Activated naive CD8-positive, alpha-beta T cell treated with anti-CD3 and anti-CD28 coated beads, Interleukin-2, amount 10 ng/mL, durations not matched to agents 7 days and 5 days (primary cell): ENCODE measurements at regions of chr18 and their contacts with region 1.

Region 1: DNA sequence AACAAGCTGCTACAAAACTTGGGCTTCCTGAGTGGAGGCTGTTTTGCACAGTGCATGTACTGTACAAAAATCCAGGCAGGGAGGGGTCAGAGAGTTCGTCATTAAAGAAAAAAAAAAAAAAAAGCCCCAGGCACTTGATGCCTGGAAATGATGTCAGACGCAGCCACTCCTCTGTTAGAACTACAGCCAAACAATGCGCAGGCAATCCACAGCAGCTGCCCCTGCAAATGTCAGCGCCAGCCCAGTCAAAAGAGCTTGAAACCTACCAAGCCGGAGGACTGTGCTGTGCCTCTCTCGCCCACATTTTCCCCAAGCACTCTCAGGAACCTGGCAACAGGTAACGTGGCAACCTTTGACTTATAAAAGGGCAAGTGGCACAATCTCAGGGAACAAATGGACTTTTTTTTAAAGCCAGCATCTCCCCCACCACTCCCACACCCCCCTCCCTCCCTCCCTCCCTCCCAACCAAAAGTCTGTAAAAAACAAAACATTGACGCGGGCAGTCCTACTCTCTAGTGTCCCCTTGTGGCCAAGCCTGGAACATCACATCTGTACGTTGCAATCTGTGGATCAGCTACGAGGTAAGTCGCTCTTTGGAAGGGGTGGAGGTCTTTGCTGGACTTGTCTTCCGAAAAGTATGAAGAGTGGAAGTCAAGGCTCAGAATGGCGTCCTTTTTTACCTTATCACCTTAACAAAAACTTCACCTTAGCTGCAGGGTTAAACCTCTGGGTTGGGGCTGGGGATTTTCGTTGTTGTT is 144.1 kb downstream of the TGIF1 start:
- DNase-seq: peak; percentile 81
- ATAC-seq: peak; percentile 90
- H3K4me3 Mint-ChIP-seq: peak overlapping the region; percentile 94
- H3K27ac Mint-ChIP-seq: peak overlapping the region; percentile 97
- H3K4me1 Mint-ChIP-seq: peaks cover 34% of the 10 kb centered on the region
- H3K27me3 Mint-ChIP-seq: no peaks in the 10 kb centered on the region

Region 2: DNA sequence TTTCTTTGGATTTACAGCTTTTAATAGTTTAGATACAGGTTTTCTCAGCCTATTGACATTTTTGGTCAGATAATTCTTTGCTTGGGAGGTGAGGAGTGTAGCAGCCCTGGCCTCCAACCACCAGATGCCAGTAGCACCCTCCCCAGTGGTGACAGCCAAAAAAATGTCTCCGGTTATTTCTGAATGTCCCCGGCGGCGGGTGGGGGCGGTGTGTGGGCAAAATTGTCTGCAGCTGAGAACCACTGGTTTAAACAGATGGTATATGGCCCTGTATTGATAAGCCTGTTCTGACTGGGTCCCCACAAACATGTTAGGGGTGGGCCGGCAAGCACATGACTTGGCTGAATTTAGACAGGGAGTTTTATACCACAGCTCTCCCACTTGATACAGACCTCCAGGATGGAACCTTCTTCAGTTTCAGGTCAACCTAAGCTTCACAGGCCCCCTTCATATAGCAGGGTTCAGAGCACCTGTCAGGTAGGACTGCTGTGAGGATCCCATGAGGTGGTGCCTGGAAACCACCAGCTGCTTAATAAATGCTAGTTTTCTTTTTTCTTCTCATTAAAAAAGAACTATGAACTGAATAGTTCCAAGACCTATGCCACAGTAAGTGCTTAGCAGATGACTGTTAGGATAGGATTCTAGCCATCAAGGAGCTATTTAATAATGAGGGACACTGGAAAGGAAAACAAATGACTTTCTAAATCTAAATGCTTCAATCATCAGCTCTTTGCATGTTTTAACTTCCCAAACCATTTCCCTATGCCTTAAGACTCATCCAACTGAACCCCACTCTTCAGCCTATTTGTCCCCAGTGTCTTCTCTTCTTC is 599.3 kb before region 1 on chr18:
- POLR2A ChIA-PET with region 1: no interaction called
- DNase-seq: peak; percentile 73
- ATAC-seq: peak; percentile 81
- H3K4me3 Mint-ChIP-seq: peak overlapping the region; percentile 52
- H3K27ac Mint-ChIP-seq: peak overlapping the region; percentile 75
- H3K4me1 Mint-ChIP-seq: peaks cover 57% of the 10 kb centered on the region
- H3K27me3 Mint-ChIP-seq: no peaks in the 10 kb centered on the region

Region 3: DNA sequence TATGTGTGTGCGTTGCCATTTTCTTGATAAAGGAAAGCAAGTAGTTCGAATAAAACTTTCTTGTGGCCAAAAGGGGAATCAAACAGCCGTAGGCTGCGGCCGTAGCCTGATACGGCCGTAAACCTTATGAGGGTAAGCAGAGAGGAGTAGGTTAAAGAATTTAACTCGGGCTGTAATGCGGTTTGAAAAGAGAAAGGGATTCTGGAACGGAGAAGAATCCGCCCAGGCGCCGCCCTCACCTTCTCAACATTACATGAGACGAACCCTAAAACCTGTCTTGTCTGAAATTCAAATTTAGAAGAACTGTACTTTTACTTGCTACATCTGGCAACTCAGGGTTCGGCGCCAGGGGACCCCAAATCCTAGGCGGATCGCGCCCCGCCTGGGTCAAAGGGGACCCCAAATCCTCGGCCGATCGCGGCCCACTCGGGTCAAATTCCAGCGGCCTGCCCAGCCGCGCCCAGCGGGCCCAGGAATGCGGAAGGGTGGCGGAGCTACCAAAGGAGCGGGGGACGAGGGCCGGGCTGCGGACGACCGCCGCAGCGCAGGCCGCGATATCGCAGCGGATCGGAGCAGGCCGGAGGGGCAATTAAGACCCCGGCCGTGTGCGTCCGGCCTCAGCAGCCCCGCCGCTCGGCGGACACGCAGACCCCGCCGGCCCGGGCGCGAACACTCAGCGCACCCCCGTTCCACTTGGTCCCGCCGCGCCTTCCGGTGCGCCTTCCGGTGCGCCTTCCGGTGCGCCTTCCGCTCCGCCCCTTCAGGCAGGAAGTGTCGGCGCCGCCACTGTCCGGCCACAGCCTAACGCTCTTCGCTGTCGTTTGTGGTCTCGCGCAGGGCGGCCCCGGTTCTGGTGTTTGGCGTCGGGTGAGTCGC is 332.5 kb before region 1 on chr18 and contains the start of gene MYL12B:
- POLR2A ChIA-PET with region 1: interaction called, 10 read pairs
- DNase-seq: peak; percentile 87
- ATAC-seq: peak; percentile 69
- H3K4me3 Mint-ChIP-seq: peak within 1 kb of the TSS; percentile 99
- H3K27ac Mint-ChIP-seq: peak within 1 kb of the TSS; percentile 100
- H3K4me1 Mint-ChIP-seq: peaks cover 55% of the 10 kb centered on the region
- H3K27me3 Mint-ChIP-seq: no peaks in the 10 kb centered on the region
- total RNA-seq, gene MYL12B: 354 to 358 TPM

Region 4: DNA sequence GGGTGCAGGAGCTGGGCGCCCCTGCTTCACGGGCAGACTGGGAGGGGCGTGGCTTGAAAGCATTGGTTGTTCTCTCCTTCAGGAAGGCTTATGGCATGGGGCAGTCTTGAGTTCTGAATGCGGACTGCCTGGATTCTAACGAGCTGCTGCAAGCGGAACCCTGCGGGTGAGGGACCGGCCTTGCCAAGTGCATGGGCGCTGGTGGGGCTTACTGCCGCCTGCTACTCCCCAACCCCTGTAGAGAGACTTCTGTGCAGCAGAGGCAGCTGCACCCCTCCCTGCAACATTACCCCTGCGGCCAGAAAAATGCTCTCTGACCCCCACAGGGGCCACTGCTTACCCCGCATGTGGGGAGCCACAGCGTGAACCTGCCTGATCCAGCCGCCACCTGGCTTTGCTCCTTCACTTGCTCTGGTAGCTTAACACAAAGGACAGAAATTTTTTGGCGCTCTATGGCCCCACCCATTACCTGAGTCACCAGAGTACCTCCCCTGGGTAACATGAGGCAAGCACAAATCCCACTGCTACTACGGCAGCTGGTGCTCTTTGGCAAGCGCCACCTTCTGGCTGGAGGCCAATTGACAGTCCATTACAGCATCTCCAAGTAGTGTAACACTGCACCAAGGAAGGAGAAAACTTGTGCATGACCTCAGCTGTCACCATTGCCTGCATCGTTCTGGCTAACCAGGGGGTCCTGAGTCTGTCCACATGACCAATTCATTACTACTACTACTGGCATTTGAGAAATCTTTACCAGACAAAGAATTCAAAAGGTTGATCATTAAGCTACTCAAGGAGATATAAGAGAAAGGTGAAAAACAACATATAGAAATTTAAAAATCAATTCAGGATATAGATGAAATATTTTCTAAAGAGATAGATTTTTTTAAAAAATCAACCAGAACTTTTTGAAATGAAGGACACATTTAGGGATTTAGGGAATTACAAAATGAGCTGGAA is 296.8 kb before region 1 on chr18:
- POLR2A ChIA-PET with region 1: interaction called, 24 read pairs
- DNase-seq: peak; percentile 87
- ATAC-seq: peak; percentile 98
- H3K4me3 Mint-ChIP-seq: peak overlapping the region; percentile 96
- H3K27ac Mint-ChIP-seq: peak overlapping the region; percentile 82
- H3K4me1 Mint-ChIP-seq: peaks cover 4% of the 10 kb centered on the region
- H3K27me3 Mint-ChIP-seq: peaks cover 27% of the 10 kb centered on the region

Region 5: GRCh38 chr18:3451183-3451988 is 142.7 kb before region 1 on chr18:
- POLR2A ChIA-PET with region 1: interaction called, 36 read pairs
- DNase-seq: peak; percentile 77
- ATAC-seq: no peak
- H3K4me3 Mint-ChIP-seq: peak overlapping the region; percentile 81
- H3K27ac Mint-ChIP-seq: peak overlapping the region; percentile 79
- H3K4me1 Mint-ChIP-seq: peaks cover 25% of the 10 kb centered on the region
- H3K27me3 Mint-ChIP-seq: no peaks in the 10 kb centered on the region

Region 6: GRCh38 chr18:3604498-3605408 is 10.7 kb after region 1 on chr18:
- POLR2A ChIA-PET with region 1: interaction called, 59 read pairs
- DNase-seq: no peak
- ATAC-seq: peak; percentile 65
- H3K4me3 Mint-ChIP-seq: no peak overlapping the region
- H3K27ac Mint-ChIP-seq: no peak overlapping the region
- H3K4me1 Mint-ChIP-seq: peaks cover 20% of the 10 kb centered on the region
- H3K27me3 Mint-ChIP-seq: no peaks in the 10 kb centered on the region

Region 7: DNA sequence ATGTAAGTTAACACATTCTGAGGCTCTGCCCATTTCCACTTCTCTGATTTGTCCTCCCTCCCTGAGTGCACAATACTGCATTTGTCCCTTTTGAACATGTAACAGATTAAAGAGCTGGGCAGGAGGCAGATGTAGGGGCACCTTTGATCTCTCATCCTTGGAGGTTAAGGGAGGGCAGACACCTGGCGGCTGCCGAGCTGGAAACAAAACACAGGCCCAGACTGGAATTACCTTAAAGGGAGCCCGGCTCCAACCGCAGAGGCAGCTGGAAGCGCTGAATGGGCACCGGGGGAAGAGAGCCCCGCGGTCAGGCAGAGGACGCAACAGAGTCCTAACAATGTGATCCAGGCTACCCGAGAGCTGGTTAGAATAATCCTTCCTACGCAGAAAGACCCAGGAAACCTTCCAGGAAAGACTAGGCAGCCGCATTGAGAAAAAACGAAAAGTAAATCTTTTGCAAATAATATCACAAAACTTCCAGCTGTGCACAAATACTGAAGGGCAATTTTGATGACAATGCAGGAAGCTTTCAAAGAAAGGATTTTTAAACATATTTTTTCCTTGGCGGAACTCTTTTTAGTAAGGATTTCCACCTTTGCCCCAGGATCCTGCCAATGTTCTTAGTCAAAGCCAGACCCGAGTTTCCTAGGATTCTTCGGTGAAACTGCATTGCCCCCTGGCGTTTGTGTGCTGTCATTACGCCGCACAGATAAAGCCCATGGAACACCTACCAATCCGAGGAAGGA is 71.9 kb after region 1 on chr18:
- POLR2A ChIA-PET with region 1: interaction called, 21 read pairs
- DNase-seq: peak; percentile 75
- ATAC-seq: peak; percentile 70
- H3K4me3 Mint-ChIP-seq: peak overlapping the region; percentile 62
- H3K27ac Mint-ChIP-seq: peak overlapping the region; percentile 44
- H3K4me1 Mint-ChIP-seq: peaks cover 16% of the 10 kb centered on the region
- H3K27me3 Mint-ChIP-seq: peaks cover 5% of the 10 kb centered on the region